ENCODE measurements at regions of chr6 and their contacts with region 1.

Region 1: DNA sequence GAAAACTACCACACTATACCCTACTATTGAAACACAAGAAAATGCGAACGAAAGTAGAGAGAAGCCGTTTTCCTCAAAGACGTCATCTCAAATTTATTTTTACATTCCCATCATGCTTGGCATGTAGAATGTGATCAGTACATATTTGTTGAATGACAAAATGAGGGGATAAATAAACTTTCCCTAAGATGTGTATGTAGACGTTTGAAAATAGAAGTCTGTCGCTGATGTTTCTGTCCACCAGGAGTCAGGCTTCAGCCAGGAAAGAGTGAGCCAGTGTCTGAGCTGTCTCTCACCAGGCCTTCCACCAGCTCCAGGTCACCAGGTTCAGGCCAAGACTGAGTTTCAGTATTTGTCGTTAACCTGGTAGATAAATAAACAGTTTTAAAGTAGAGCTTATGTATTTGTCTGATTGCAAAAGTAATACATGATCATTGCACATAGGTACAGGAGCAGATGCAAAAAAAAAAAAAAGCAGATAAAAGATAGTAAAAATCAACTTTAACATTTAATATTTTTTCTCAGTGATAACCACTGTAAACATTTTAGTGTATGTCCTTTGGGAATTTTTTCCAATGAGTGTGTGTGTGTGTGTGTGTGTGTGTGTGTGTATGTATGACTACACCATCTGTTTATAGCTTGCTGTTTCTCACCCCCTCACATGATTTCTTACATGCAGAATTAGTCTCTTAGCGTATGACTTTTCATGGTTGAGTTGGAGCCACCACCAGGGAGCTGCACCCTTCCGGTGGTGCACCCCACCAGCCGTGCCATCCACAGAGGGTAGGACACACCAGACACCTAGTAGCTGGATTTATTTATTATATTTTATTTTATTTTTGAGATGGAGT is 26.2 kb downstream of the WRNIP1 start:
- DNase-seq: peak; percentile 36 to 92
- H3K4me3 ChIP-seq: peak overlapping the region in 1 of 2 donors; percentile 49
- H3K27ac ChIP-seq: peak overlapping the region; percentile 89 to 95
- H3K4me1 ChIP-seq: peaks cover 9 to 34% of the 10 kb centered on the region in 2 donors
- H3K27me3 ChIP-seq: no peaks in the 10 kb centered on the region
- CTCF ChIP-seq: peak; percentile 74 to 90 (median 77)

Region 2: DNA sequence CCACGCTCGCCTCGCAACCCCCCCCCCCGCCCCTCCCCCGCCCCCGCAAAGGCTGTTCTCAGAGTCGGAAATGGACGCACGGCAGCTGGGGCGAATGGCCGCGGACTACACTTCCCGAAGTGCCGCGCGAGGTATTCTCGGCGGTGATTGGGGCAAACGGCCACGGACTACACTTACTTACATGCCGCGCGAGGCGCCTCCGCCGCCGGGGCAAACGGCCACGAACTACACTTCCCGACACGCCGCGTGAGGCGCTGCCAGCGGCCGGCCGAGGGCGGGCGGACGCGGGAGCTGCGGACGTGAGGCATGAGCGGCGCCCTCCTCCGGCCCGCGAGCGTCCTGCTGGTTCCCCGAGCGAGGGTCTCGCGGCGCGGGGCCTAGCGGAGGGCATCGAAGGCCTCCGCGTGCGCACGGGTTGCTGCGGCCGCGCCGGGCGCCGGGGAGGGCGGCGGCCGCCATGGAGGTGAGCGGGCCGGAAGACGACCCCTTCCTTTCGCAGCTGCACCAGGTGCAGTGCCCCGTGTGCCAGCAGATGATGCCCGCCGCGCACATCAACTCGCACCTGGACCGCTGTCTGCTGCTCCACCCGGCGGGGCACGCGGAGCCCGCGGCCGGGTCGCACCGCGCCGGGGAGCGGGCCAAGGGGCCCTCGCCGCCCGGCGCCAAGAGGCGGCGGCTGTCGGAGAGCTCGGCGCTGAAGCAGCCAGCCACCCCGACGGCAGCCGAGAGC is 26.0 kb before region 1 on chr6 and contains the start of gene WRNIP1:
- intact Hi-C with region 1: loop called (anchors 1 kb)
- DNase-seq: peak; percentile 98 to 100
- H3K4me3 ChIP-seq: peak within 1 kb of the TSS; percentile 93
- H3K27ac ChIP-seq: peak within 1 kb of the TSS; percentile 92 to 99
- H3K4me1 ChIP-seq: peaks cover 6 to 17% of the 10 kb centered on the region in 2 donors
- H3K27me3 ChIP-seq: no peaks in the 10 kb centered on the region
- CTCF ChIP-seq: peak; percentile 47 to 93 (median 58)
- total RNA-seq, gene WRNIP1: 100 TPM

Region 3: DNA sequence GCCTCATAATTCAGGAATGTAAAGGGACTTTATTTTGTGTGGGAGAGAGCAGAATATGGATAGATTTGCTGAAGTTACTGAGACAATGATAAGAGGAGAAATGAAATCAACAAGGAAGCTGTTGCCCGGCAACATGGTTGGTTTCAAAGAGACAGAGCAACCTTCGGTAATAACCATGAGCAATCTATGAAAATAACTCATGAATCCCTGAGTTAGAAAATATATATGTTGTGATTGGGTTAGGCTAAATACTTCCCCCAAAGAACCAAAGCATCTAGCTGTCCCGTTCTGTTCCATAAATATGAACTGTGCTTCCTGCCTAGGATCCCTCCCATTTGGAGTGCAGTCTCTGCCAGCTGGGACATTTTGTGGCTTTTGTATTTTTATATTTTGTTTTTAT is 27.2 kb after region 1 on chr6:
- intact Hi-C with region 1: loop called (anchors 2 kb)
- DNase-seq: no peak
- H3K4me3 ChIP-seq: peak overlapping the region; percentile 4 to 11
- H3K27ac ChIP-seq: peak overlapping the region; percentile 72 to 80
- H3K4me1 ChIP-seq: peaks cover 0 to 31% of the 10 kb centered on the region in 2 donors
- H3K27me3 ChIP-seq: no peaks in the 10 kb centered on the region
- CTCF ChIP-seq: no peak

Region 4: DNA sequence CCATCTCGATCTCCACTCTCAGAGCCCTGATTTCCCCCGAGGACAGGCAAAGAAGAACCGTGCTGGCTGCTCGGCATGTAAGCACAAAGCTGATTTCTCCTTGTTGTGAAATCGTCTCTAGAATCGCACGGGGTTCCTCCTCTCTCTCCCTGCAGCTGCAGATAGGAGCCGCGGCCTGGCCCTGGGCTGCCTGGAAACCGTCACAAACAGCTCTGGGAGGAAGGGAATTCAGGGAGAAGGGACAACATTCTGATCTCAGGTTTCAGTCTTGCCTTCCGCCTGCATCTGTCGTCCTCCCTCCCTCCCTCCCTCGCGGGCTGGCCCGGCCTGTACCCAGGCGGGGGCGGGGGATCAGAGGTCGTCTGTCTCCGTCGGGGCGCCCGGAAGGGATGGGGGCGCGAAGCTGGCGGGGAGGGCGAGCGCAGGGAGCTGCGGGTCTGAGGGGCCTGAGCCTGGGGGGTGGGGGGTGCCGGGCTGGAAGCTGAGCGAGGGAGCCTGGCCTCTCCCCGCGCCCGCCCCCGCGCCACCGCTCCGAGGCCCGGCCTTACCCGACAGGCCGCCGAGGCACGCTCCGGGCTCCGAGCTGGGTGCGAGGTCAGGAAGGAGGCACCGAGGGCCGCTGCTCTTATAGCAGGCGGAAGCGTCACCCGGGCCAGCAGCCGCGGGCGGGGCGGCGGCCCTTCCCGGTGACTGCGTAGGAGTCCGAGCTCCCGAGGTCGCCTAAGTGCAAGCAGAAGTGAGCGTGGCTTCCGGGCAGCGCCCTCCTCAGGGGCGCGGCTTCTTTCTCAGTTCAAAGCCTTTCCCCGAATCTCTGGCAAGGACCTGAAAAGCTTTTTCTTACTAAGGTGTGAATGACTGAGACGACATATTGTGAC is 50.2 kb after region 1 on chr6 and contains the start of gene SERPINB1:
- intact Hi-C with region 1: loop called (anchors 1 kb)
- DNase-seq: peak; percentile 75 to 97
- H3K4me3 ChIP-seq: peak within 1 kb of the TSS; percentile 74 to 87
- H3K27ac ChIP-seq: peak within 1 kb of the TSS; percentile 97 to 99
- H3K4me1 ChIP-seq: peaks cover 10 to 16% of the 10 kb centered on the region in 2 donors
- H3K27me3 ChIP-seq: no peaks in the 10 kb centered on the region
- CTCF ChIP-seq: peak in 1 of 3 experiments; percentile 20
- total RNA-seq, gene SERPINB1: 14.0 TPM

Region 5: DNA sequence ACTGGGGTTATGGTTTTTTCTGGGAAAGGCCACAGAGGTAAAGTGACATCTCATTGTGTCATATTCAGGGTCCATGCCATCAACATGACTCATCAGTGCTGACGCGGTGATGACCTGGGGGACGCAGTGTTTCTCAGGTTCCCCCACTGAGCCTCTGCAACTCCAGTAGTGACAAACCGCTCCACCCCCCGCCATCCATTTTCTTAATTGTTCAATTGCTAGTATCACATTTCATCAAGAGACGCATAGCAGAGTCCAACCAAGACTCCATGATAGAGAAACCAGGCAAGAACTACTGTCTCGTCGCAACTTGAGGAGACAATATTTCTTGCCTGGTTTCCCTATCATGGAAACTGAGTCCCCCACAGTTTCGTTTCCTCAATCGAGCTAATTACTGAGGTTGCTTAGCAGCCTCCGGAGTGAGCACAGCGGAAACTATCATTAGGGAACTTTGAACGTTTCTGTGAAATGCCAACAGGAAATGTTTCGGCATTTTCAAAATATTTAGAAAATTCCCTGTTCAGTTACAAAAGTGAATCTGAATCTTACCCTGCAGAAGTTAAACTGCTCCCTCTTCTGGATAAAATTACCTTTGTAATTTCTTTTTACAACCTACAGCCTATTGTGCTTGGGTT is 62.5 kb after region 1 on chr6:
- intact Hi-C with region 1: loop called (anchors 1 kb)
- DNase-seq: peak; percentile 55 to 92
- H3K4me3 ChIP-seq: peak overlapping the region; percentile 39 to 64
- H3K27ac ChIP-seq: peak overlapping the region; percentile 81 to 88
- H3K4me1 ChIP-seq: peaks cover 7 to 10% of the 10 kb centered on the region in 2 donors
- H3K27me3 ChIP-seq: no peaks in the 10 kb centered on the region
- CTCF ChIP-seq: peak; percentile 34 to 65 (median 43)

Region 6: GRCh38 chr6:2931970-2932748 is 140.8 kb after region 1 on chr6:
- intact Hi-C with region 1: loop called (anchors 1 kb)
- DNase-seq: peak; percentile 58 to 92
- H3K4me3 ChIP-seq: peak overlapping the region in 1 of 2 donors; percentile 32
- H3K27ac ChIP-seq: no peak overlapping the region
- H3K4me1 ChIP-seq: no peaks in the 10 kb centered on the region
- H3K27me3 ChIP-seq: no peaks in the 10 kb centered on the region
- CTCF ChIP-seq: peak; percentile 88 to 97 (median 91)